ENCODE measurements at regions of chr13 and their contacts with region 1.

Region 1: GRCh38 chr13:44435142-44435982 is 61.7 kb downstream of the SERP2 start:
- DNase-seq: peak; percentile 69 to 94
- ATAC-seq: peak; percentile 64 to 68
- H3K4me3 ChIP-seq: peak overlapping the region; percentile 91
- H3K27ac ChIP-seq: peak overlapping the region; percentile 94 to 97
- H3K4me1 ChIP-seq: peaks cover 43% of the 10 kb centered on the region
- CTCF ChIP-seq: no peak
- EP300 ChIP-seq: no peak
- POLR2A ChIP-seq: peak; percentile 26; the same call in 1 of the 2 replicates
- RAD21 ChIP-seq: peak in 1 of 2 experiments; percentile 1; a peak in 1 of 5 replicates

Region 2: DNA sequence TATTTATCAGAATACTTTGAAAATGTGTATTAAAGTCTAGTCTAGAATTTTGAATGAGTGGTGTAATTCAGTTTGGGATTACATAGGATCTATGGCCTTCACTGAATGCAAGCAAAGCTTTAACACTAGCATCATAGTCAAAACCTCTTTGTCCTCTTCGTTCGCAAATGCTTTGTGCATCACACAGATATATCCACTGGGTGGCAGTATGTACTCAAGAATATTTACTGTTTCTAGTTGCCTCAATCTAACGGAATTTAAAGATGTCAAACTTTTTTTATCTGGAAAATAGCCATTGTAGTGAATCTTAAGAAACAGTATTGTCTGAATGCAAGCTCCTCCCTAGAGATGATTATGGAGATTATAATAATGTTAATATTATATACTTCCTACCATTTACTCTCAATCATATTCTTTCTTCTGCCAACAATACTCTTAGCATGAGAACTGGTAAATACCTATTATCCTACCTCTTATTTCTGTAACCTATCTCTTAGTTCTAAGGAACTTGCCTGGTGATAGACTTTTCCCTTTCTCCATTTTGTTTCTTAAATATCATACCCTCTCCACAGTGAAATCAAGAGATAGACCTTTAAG is 529.8 kb before region 1 on chr13:
- CTCF ChIA-PET with region 1: interaction called, 43 read pairs
- POLR2A ChIA-PET with region 1: interaction called, 17 read pairs
- DNase-seq: peak in 1 of 2 experiments; percentile 59
- ATAC-seq: peak; percentile 50 to 79; a peak in 5 of 6 replicates
- H3K4me3 ChIP-seq: no peak overlapping the region
- H3K27ac ChIP-seq: no peak overlapping the region
- H3K4me1 ChIP-seq: peaks cover 23% of the 10 kb centered on the region
- CTCF ChIP-seq: peak; percentile 74
- EP300 ChIP-seq: no peak
- POLR2A ChIP-seq: no peak
- RAD21 ChIP-seq: peak; percentile 82 to 86

Region 3: GRCh38 chr13:44160591-44161191 is 274.7 kb before region 1 on chr13:
- CTCF ChIA-PET with region 1: no interaction called
- POLR2A ChIA-PET with region 1: interaction called, 26 read pairs
- DNase-seq: no peak
- ATAC-seq: no peak
- H3K4me3 ChIP-seq: no peak overlapping the region
- H3K27ac ChIP-seq: peak overlapping the region; percentile 79 to 96
- H3K4me1 ChIP-seq: peaks cover 30% of the 10 kb centered on the region
- CTCF ChIP-seq: no peak
- EP300 ChIP-seq: no peak
- POLR2A ChIP-seq: no peak
- RAD21 ChIP-seq: no peak

Region 4: GRCh38 chr13:44243198-44243857 is 192.0 kb before region 1 on chr13:
- CTCF ChIA-PET with region 1: interaction called, 7 read pairs
- POLR2A ChIA-PET with region 1: interaction called, 21 read pairs
- DNase-seq: peak in 1 of 2 experiments; percentile 66
- ATAC-seq: peak in 1 of 2 experiments; percentile 76; a peak in 3 of 6 replicates
- H3K4me3 ChIP-seq: no peak overlapping the region
- H3K27ac ChIP-seq: peak overlapping the region in 1 of 2 experiments; percentile 48; a peak in 3 of 6 replicates
- H3K4me1 ChIP-seq: no peaks in the 10 kb centered on the region
- CTCF ChIP-seq: no peak
- EP300 ChIP-seq: no peak
- POLR2A ChIP-seq: no peak
- RAD21 ChIP-seq: peak; percentile 39 to 51; a peak in 4 of 5 replicates

Region 5: GRCh38 chr13:44306401-44307192 is 128.8 kb before region 1 on chr13:
- CTCF ChIA-PET with region 1: interaction called, 6 read pairs
- POLR2A ChIA-PET with region 1: interaction called, 80 read pairs
- DNase-seq: peak; percentile 36 to 94
- ATAC-seq: peak; percentile 85
- H3K4me3 ChIP-seq: peak overlapping the region; percentile 17; the same call in 1 of the 3 replicates
- H3K27ac ChIP-seq: peak overlapping the region; percentile 93 to 97
- H3K4me1 ChIP-seq: peaks cover 81% of the 10 kb centered on the region
- CTCF ChIP-seq: no peak
- EP300 ChIP-seq: peak; percentile 94 to 98; a peak in 4 of 5 replicates
- POLR2A ChIP-seq: no peak
- RAD21 ChIP-seq: peak; percentile 39 to 62

Measured in A549 (cell line).